ENCODE measurements at regions of chr11 and their contacts with region 1.

Region 1: DNA sequence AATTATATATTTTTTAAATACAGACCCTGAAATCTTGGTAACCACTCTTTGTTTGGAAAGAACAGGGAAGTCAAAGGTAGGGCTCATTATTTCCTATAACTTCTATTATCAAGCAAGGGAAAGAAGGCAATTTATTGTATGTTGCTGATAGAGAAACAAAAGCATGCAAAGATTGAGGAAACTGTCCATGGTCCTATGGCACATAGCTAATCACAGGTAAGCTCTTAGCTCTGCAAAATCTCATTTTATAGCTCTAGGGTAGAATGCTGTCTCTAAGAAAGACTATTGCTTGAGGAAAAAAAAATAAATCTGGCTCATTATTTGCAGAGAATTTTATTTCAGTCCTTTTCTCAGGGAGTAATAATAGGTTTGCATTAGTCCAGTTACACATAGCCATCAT is 7.4 kb upstream of the GUCY1A2 start:
- DNase-seq: no peak
- ATAC-seq: no peak
- H3K4me3 ChIP-seq: no peak overlapping the region
- H3K27ac ChIP-seq: no peak overlapping the region
- H3K4me1 ChIP-seq: no peaks in the 10 kb centered on the region
- H3K27me3 ChIP-seq: peaks cover 0 to 16% (median 2%) of the 10 kb centered on the region in 9 donors
- CTCF ChIP-seq: no peak
- POLR2A ChIP-seq: no peak

Region 2: GRCh38 chr11:106920899-106921509 is 104.7 kb before region 1 on chr11:
- intact Hi-C with region 1: loop called in 1 of 10 experiments (anchors 5 kb)
- DNase-seq: peak in 1 of 5 donors; percentile 13
- ATAC-seq: peak in 2 of 4 donors; percentile 20 to 54
- H3K4me3 ChIP-seq: no peak overlapping the region
- H3K27ac ChIP-seq: peak overlapping the region in 3 of 12 donors; percentile 11 to 54 (median 27)
- H3K4me1 ChIP-seq: peaks cover 0 to 3% (median 0%) of the 10 kb centered on the region in 12 donors
- H3K27me3 ChIP-seq: no peaks in the 10 kb centered on the region
- CTCF ChIP-seq: no peak
- POLR2A ChIP-seq: no peak

Region 3: GRCh38 chr11:106950067-106950491 is 75.6 kb before region 1 on chr11:
- intact Hi-C with region 1: no loop called
- DNase-seq: peak in 3 of 5 donors; percentile 23 to 59 (median 28)
- ATAC-seq: peak in 2 of 4 donors; percentile 26 to 46
- H3K4me3 ChIP-seq: no peak overlapping the region
- H3K27ac ChIP-seq: no peak overlapping the region
- H3K4me1 ChIP-seq: peaks cover 0 to 10% (median 0%) of the 10 kb centered on the region in 12 donors
- H3K27me3 ChIP-seq: no peaks in the 10 kb centered on the region
- CTCF ChIP-seq: no peak
- POLR2A ChIP-seq: no peak